RWPE1 (cell line): ENCODE measurements at regions of chr19 and their contacts with region 1.

Region 1: DNA sequence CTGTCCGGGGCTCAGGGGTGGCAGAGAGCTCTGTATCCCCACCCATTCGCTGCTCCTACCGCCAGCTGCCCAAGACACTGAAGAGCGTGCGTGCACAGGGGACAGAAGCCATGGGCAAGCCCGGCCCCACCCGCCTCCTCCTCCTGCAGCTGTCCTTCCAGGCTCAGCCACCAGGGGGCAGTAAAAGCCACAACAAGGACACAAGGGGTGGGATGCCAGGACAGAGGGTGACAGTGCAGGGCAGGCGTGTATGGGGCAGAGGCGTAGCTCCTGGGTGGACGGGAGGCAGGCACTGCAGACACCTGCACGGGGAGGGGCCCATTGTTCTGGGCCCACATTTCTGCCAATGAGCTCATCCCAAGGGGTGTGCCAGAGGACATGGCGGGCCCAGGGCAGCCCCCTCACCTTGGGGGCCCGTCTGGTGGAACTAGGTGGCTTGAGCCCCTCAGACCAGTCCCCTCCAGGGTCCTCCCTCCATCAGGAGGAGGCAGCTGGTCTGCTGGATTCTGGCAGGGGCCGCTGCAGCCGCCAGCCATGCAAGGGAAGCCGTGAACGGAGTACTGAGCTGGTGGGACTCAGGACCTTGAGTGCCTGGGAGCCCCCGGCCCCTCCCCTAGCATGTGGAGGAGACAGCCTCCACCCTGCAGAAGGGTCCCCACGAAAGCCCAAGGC is 61.1 kb downstream of the MLLT1 start:
- DNase-seq: peak; percentile 70
- H3K27ac ChIP-seq: peak overlapping the region; percentile 91
- CTCF ChIP-seq: peak; percentile 89

Region 2: GRCh38 chr19:6236310-6237291 is 18.0 kb after region 1 on chr19:
- CTCF ChIA-PET with region 1: interaction called, 15 read pairs
- POLR2A ChIA-PET with region 1: no interaction called
- DNase-seq: peak; percentile 70
- H3K27ac ChIP-seq: peak overlapping the region; percentile 99
- CTCF ChIP-seq: no peak

Region 3: GRCh38 chr19:6297202-6297601 is 78.6 kb after region 1 on chr19:
- CTCF ChIA-PET with region 1: interaction called, 20 read pairs
- POLR2A ChIA-PET with region 1: no interaction called
- DNase-seq: no peak
- H3K27ac ChIP-seq: no peak overlapping the region
- CTCF ChIP-seq: no peak